GM12878 (cell line): ENCODE measurements at regions of chr3 and their contacts with region 1.

Region 1: DNA sequence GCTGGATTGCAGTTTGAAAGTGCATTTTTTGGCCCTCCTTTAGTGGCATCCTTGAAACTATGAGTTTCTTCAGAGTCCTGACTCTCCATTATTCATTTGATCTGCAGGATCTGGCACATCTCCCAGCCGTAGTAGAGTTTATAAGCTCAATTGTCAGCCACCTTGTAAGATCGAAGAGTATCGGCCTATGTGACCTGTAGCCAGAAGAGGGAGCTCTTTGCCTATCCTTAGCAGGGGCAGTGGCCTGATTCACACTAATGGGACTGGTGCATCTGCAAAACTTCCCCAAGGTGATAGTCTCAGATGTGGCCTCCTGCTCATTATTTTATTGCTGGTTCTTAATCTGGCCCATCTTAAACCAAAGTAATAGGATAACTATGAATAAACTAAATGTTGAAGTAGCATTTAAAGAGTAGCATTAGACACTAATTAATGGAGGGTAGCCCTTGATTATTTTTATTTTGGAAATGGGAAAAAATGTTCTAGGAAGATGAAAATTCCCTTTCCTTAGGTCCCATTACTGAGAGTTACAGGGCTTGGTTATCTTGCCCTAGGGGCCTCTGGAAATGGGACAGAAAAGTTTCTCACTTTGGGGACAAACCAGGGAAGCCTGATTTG is 21.2 kb downstream of the GCSAM start:
- DNase-seq: no peak
- ATAC-seq: peak; percentile 59
- H3K4me3 ChIP-seq: no peak overlapping the region
- H3K27ac ChIP-seq: peak overlapping the region; percentile 95
- H3K4me1 ChIP-seq: peaks cover 46% of the 10 kb centered on the region
- H3K27me3 ChIP-seq: no peaks in the 10 kb centered on the region
- CTCF ChIP-seq: peak; percentile 91 to 98 (median 93); a peak in 5 of 6 replicates
- EP300 ChIP-seq: no peak
- POLR2A ChIP-seq: no peak
- RAD21 ChIP-seq: peak; percentile 100

Region 2: DNA sequence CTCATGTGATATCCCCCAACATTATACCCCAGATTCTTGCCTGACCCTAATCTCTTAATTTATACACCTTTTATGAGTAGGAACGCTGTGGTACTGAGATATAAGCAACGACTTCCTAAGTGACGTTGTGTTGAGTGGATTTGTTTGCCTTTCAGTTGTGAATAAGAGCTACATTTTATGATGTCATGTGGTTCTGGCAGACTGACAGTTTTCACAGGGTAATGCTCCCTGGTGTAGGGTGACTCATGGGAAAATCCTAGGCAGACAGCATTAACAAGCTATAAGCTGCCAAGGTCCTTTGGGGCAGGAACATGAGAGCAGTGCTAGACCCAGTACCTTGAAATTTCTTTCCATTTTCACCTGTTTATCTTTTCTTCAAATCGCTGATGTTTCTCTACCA is 14.5 kb before region 1 on chr3:
- CTCF ChIA-PET with region 1: interaction called, 13 read pairs
- POLR2A ChIA-PET with region 1: interaction called, 4 read pairs
- RAD21 ChIA-PET with region 1: interaction called, 4 read pairs
- SMC1A ChIA-PET with region 1: interaction called, 8 read pairs
- in situ Hi-C with region 1: no loop called
- intact Hi-C with region 1: no loop called
- DNase-seq: no peak
- ATAC-seq: peak; percentile 85
- H3K4me3 ChIP-seq: no peak overlapping the region
- H3K27ac ChIP-seq: no peak overlapping the region
- H3K4me1 ChIP-seq: peaks cover 2% of the 10 kb centered on the region
- H3K27me3 ChIP-seq: no peaks in the 10 kb centered on the region
- CTCF ChIP-seq: no peak
- EP300 ChIP-seq: no peak
- POLR2A ChIP-seq: no peak
- RAD21 ChIP-seq: no peak

Region 3: GRCh38 chr3:112321867-112322649 is 210.2 kb after region 1 on chr3:
- CTCF ChIA-PET with region 1: interaction called, 74 read pairs
- POLR2A ChIA-PET with region 1: interaction called, 5 read pairs
- RAD21 ChIA-PET with region 1: interaction called, 28 read pairs
- SMC1A ChIA-PET with region 1: interaction called, 74 read pairs
- in situ Hi-C with region 1: no loop called
- intact Hi-C with region 1: loop called (anchors 1 kb)
- DNase-seq: no peak
- ATAC-seq: no peak
- H3K4me3 ChIP-seq: no peak overlapping the region
- H3K27ac ChIP-seq: no peak overlapping the region
- H3K4me1 ChIP-seq: no peaks in the 10 kb centered on the region
- H3K27me3 ChIP-seq: no peaks in the 10 kb centered on the region
- CTCF ChIP-seq: no peak
- EP300 ChIP-seq: no peak
- POLR2A ChIP-seq: no peak
- RAD21 ChIP-seq: no peak

Region 4: DNA sequence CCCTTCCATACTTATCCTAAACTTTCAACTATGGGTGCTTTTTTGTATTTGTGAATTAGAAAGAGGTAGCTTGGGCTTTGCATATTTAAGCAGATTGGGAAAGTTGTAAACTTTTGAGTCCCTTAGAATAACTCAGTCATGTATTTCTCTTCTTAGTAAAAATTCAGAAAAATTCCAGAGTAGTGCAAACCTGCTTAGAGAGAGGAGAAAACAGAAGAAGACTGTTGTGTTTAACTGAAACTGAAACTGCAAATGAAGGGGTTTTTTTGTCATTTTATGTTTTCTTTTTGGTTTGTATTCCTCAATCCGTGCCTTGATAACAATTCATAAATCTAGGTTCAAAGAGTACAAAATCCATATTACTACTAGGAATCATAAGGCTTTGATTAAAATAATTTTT is 252.4 kb after region 1 on chr3:
- CTCF ChIA-PET with region 1: interaction called, 6 read pairs
- POLR2A ChIA-PET with region 1: no interaction called
- RAD21 ChIA-PET with region 1: interaction called, 9 read pairs
- SMC1A ChIA-PET with region 1: interaction called, 12 read pairs
- in situ Hi-C with region 1: no loop called
- intact Hi-C with region 1: no loop called
- DNase-seq: no peak
- ATAC-seq: peak; percentile 79
- H3K4me3 ChIP-seq: peak overlapping the region; percentile 26; the same call in 1 of the 2 replicates
- H3K27ac ChIP-seq: peak overlapping the region; percentile 84
- H3K4me1 ChIP-seq: peaks cover 29% of the 10 kb centered on the region
- H3K27me3 ChIP-seq: no peaks in the 10 kb centered on the region
- CTCF ChIP-seq: no peak
- EP300 ChIP-seq: no peak
- POLR2A ChIP-seq: no peak
- RAD21 ChIP-seq: no peak

Region 5: DNA sequence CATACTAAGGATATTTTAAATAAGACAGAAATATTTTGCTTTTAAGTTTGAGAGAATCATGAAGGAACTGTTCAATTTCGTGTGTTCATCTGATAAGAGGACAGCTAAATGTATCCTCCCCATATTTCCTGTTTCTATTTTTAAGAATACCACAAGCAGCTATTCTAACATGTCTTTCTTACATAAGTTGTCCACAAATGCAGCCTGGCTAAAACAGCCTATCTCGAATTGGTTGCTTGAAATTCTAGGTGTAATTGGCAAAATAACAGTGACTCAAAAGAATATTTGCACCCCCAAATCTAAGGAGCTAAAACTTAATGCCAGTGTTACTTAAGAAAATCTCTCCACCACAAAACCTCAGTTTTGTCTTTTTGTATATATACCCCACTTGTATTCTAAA is 352.4 kb after region 1 on chr3:
- CTCF ChIA-PET with region 1: interaction called, 12 read pairs
- POLR2A ChIA-PET with region 1: interaction called, 4 read pairs
- RAD21 ChIA-PET with region 1: interaction called, 9 read pairs
- SMC1A ChIA-PET with region 1: interaction called, 6 read pairs
- in situ Hi-C with region 1: loop called (anchors 5 kb)
- intact Hi-C with region 1: loop called (anchors 2 kb)
- DNase-seq: peak; percentile 67
- ATAC-seq: peak; percentile 45
- H3K4me3 ChIP-seq: peak overlapping the region; percentile 16; the same call in 1 of the 2 replicates
- H3K27ac ChIP-seq: peak overlapping the region; percentile 77
- H3K4me1 ChIP-seq: peaks cover 61% of the 10 kb centered on the region
- H3K27me3 ChIP-seq: no peaks in the 10 kb centered on the region
- CTCF ChIP-seq: no peak
- EP300 ChIP-seq: peak; percentile 10 to 78; a peak in 2 of 4 replicates
- POLR2A ChIP-seq: no peak
- RAD21 ChIP-seq: no peak

Region 6: DNA sequence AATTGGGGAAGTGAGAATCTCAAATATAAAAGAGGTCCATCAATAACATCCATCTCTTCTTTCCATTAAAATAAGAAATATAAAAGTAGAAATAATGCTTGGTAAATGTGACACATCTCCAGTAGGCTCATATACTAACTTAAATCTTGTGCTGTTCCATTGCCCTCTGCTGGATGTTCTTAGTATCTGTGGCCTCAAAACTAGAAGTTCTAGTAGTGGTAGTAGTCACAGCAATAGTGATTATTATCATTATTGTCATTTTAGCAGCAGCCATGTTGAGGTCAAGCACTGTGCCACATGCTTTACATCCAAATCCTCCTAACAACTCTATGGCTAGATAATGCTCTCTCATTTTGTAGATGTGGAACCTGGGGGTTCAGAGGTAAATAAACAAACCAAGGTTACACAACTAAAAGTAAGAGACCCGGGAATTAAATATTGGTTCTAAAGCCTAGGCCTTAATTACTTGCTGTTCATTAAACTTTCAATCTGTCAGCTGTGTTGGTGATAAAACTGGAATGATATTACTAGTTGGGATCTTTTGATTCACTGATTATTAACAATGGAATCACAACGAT is 407.6 kb after region 1 on chr3:
- CTCF ChIA-PET with region 1: interaction called, 25 read pairs
- POLR2A ChIA-PET with region 1: no interaction called
- RAD21 ChIA-PET with region 1: interaction called, 17 read pairs
- SMC1A ChIA-PET with region 1: interaction called, 12 read pairs
- in situ Hi-C with region 1: loop called (anchors 5 kb)
- intact Hi-C with region 1: loop called (anchors 1 kb)
- DNase-seq: peak; percentile 68
- ATAC-seq: peak; percentile 83
- H3K4me3 ChIP-seq: no peak overlapping the region
- H3K27ac ChIP-seq: peak overlapping the region; percentile 54
- H3K4me1 ChIP-seq: peaks cover 4% of the 10 kb centered on the region; the same call in 1 of the 2 replicates
- H3K27me3 ChIP-seq: no peaks in the 10 kb centered on the region
- CTCF ChIP-seq: peak; percentile 68 to 72 (median 70)
- EP300 ChIP-seq: no peak
- POLR2A ChIP-seq: no peak
- RAD21 ChIP-seq: peak; percentile 92

Region 7: GRCh38 chr3:112979240-112979832 is 867.4 kb after region 1 on chr3:
- CTCF ChIA-PET with region 1: no interaction called
- POLR2A ChIA-PET with region 1: no interaction called
- RAD21 ChIA-PET with region 1: interaction called, 10 read pairs
- SMC1A ChIA-PET with region 1: interaction called, 3 read pairs
- in situ Hi-C with region 1: no loop called
- intact Hi-C with region 1: loop called (anchors 10 kb)
- DNase-seq: no peak
- ATAC-seq: peak; percentile 51
- H3K4me3 ChIP-seq: no peak overlapping the region
- H3K27ac ChIP-seq: no peak overlapping the region
- H3K4me1 ChIP-seq: peaks cover 25% of the 10 kb centered on the region
- H3K27me3 ChIP-seq: no peaks in the 10 kb centered on the region
- CTCF ChIP-seq: peak; percentile 35 to 62 (median 49); a peak in 4 of 6 replicates
- EP300 ChIP-seq: no peak
- POLR2A ChIP-seq: no peak
- RAD21 ChIP-seq: peak; percentile 74